Pancreas (tissue), 10 donors: ENCODE measurements at regions of chr5 and their contacts with region 1.

Region 1: DNA sequence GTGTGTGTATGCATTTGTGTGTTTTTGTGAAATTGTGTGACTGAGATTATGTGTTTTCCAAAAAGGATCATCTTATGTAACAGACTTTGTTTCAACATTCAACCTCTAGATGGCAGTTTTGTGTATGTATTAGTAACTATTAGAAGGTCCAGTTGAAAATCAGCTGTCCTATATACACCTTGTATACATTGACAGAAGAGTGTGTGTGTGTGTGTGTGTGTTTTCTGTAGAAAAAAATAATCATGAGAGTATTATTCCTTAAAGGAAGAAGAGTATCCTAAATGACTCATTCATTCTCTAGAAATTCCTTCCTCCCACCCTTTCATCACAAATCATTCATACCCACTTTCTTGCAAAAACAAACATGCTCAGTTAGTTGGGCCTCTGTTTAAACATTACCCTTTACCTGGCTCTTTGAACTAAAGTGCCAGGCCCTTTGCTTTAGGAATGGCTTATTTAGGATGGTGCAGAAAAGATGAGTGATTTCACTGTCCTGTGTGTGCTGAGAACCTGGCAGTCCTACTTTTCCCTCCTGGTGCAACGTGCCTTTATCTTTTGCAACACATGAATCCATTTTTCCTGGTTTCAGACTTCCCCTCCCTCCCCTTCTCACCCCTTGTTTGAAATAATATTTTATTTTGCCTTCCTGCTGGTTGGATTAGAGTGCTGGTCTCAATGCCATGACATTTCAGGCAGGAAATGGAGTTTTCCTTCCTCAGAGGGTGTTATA is 152.2 kb downstream of the ARHGAP26 start:
- DNase-seq: no peak
- ATAC-seq: peak in 3 of 4 donors; percentile 37 to 60 (median 48)
- H3K4me3 ChIP-seq: no peak overlapping the region
- H3K27ac ChIP-seq: peak overlapping the region in 2 of 4 donors; percentile 20 to 54
- H3K4me1 ChIP-seq: peaks cover 34 to 57% (median 54%) of the 10 kb centered on the region in 3 donors
- H3K27me3 ChIP-seq: no peaks in the 10 kb centered on the region
- CTCF ChIP-seq: peak in 1 of 4 donors; percentile 24

Region 2: DNA sequence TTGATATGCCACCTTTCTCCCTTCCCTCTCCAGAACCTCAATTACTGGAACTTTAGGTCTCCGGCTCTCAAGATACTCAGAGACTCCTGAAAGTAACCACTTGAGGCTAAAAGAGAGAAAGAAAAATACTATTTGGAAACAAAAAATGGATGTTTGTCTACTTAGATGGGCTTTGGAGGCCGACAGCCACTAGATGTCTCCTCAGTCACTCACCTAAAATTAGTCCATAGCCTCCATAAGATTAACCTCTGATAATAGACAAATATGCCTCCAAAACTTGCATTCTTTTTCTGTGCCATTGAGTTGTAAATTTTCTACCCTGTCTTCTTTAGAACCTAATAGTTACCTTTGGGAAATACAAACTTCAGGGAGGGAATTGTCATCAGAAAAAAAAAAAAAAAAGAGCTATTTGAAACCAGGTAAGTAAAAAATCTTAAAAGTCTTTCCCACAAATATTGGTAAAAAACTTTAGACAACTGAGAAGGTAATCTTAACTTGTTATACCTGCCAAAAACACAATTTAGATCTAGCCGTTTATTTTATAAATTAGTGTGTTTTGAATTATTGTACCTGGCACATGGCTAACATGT is 1033.0 kb before region 1 on chr5:
- intact Hi-C with region 1: no loop called
- DNase-seq: no peak
- ATAC-seq: no peak
- H3K4me3 ChIP-seq: no peak overlapping the region
- H3K27ac ChIP-seq: no peak overlapping the region
- H3K4me1 ChIP-seq: no peaks in the 10 kb centered on the region
- H3K27me3 ChIP-seq: peaks cover 0 to 10% (median 0%) of the 10 kb centered on the region in 4 donors
- CTCF ChIP-seq: no peak

Region 3: DNA sequence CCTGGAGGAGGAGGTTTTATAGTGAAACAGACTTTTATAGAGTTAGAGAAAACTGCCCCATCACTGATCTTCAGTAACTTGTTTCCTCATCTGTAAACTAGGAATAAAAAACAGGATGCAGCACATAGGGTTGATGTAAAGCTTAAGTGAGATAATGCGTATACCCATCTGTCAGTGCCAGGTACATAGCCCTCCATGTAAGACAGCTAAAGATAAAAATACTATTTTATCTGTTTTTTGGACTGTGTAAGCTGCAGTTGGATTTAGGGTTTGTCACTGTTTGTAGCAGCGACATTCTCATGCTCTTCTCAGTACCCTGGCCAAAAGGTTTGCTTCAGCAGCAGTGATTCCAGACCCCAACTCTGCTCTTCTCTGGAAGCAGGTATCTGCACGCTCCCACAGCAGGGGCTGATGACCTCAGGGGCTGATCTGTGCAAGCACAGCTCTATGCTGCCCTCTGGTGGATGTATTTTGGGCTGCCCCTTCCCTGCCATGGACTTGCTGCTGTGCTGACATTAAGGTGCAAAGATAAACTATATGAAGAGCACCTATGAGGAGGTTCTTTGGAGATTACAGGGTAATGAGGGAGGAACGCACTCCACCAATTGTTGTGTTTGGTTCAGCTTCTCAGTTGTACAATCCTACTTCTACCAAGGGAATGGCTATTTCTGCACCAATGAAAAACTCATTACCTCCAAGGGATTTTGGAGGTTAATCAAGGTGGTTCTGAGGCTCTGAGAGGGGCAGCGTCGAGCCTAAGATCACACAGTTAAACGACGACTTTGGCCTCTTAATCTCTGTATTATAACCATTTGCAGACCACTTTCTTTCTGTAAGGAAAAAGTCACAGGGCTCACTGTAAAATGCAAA is 902.7 kb after region 1 on chr5:
- intact Hi-C with region 1: loop called in 1 of 3 experiments (anchors 10 kb)
- DNase-seq: peak; percentile 63 to 91 (median 84)
- ATAC-seq: peak; percentile 93 to 99 (median 98)
- H3K4me3 ChIP-seq: no peak overlapping the region
- H3K27ac ChIP-seq: no peak overlapping the region
- H3K4me1 ChIP-seq: no peaks in the 10 kb centered on the region
- H3K27me3 ChIP-seq: no peaks in the 10 kb centered on the region
- CTCF ChIP-seq: peak; percentile 89 to 94 (median 94)